ENCODE measurements at regions of chr13 and their contacts with region 1.

Region 1: DNA sequence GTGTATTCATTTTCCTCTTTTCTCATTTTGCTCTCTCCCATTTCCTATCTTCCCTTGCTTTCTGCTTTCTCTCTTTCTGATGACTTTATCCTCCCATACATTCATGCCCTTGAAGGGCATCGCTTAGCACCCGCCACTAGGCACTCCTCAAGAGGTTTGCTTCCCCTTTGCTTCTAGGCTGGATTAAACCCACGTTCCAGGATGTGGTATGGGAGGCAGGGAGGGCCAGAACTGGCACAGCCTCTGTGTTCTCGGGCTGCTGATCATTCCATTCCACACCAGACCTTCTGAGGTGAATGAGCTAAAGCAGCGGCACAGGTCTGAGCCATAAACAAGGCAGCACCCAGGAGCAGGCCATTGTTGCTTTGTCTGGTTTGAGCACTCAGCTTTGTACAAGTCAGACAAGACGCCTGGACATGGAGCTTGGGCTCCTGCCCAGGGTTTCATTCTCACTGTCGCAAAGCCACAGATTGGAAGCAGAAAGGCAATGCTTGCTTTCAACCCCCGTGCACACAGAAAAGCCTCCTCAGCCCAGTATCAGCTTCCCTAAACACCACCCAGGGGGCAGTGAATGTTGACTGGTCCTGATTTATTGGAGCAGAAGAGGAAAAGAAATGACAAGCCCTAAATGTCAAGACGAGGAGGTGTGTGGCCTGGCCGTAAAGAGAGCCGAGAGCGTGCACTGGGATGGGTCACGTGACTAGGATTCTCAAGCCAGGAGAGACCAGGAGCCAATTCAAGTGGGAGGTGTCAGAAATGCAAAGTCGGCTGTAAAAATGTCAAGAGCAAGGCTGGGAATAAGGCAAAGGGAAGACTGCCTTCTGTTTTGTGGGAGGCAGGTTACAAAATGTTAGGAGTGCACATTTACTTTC is 218.0 kb upstream of the SERP2 start:
- DNase-seq: peak; percentile 73
- H3K4me3 ChIP-seq: peak overlapping the region in 2 of 4 donors; percentile 7 to 35
- H3K27ac ChIP-seq: peak overlapping the region; percentile 63 to 85 (median 68)
- H3K4me1 ChIP-seq: peaks cover 9 to 31% (median 13%) of the 10 kb centered on the region in 4 donors
- H3K27me3 ChIP-seq: no peaks in the 10 kb centered on the region
- CTCF ChIP-seq: no peak
- EP300 ChIP-seq: no peak
- POLR2A ChIP-seq: no peak

Region 2: GRCh38 chr13:43848001-43848649 is 307.5 kb before region 1 on chr13:
- in situ Hi-C with region 1: no loop called
- intact Hi-C with region 1: no loop called
- DNase-seq: no peak
- H3K4me3 ChIP-seq: no peak overlapping the region
- H3K27ac ChIP-seq: no peak overlapping the region
- H3K4me1 ChIP-seq: peaks cover 0 to 4% (median 0%) of the 10 kb centered on the region in 4 donors
- H3K27me3 ChIP-seq: no peaks in the 10 kb centered on the region
- CTCF ChIP-seq: no peak
- EP300 ChIP-seq: no peak
- POLR2A ChIP-seq: no peak

Region 3: DNA sequence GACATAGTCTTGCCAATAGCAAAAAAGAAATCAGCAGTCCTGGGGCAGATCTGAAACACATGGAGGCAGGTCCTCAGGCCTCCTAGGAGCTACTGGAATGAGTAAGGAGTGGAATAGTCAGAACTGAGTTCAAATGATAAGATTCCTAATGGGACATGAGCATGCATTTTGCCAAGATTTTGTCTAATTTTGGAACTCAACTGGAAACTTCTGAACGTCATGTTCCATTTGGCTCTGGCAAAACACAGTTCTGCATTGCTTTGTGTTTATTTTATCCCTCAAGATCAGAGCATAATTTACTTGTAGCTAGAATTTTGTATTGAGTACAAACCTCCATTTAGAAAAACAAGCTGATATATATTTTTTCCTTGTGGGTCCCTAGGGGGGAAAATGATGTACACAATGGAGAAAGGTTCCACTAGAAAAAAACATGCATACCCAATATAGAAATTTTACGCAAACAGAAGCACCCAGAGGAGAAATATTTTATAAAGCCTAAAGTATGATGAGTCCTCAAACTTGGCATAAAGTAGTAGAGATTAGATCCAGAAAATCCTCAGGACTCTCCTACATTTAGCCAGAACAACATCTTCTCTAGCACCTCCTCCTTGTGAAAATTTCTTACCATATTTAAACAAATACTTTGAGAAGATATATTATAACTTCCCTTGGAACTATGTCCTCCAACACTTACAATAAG is 68.9 kb after region 1 on chr13:
- in situ Hi-C with region 1: no loop called
- intact Hi-C with region 1: loop called (anchors 5 kb)
- DNase-seq: no peak
- H3K4me3 ChIP-seq: no peak overlapping the region
- H3K27ac ChIP-seq: peak overlapping the region; percentile 57 to 87 (median 76)
- H3K4me1 ChIP-seq: peaks cover 4 to 40% (median 9%) of the 10 kb centered on the region in 4 donors
- H3K27me3 ChIP-seq: no peaks in the 10 kb centered on the region
- CTCF ChIP-seq: no peak
- EP300 ChIP-seq: peak; percentile 79
- POLR2A ChIP-seq: no peak

Measured in transverse colon (tissue), 4 donors.